Activated T-helper 1 cell treated with anti-CD3 and anti-CD28 coated beads, Interleukin-12 subunit alpha, Interleukin-12 subunit beta, Interleukin-2, Interleukin-4 antibody, amounts not matched to agents 30 ng/mL and 10 ng/mL and 1 ng/mL, durations not matched to agents 14 hours and 24 hours and 36 hours (primary cell): ENCODE measurements at regions of chr1 and their contacts with region 1.

Region 1: GRCh38 chr1:46036894-46037839 is 95.3 kb downstream of the PIK3R3 start:
- DNase-seq: peak; percentile 62
- H3K4me3 Mint-ChIP-seq: no peak overlapping the region
- H3K27ac Mint-ChIP-seq: no peak overlapping the region
- H3K4me1 Mint-ChIP-seq: no peaks in the 10 kb centered on the region
- H3K27me3 Mint-ChIP-seq: no peaks in the 10 kb centered on the region

Region 2: GRCh38 chr1:46223472-46223943 is 186.3 kb after region 1 on chr1:
- intact Hi-C with region 1: loop called (anchors 1 kb)
- DNase-seq: peak; percentile 34
- H3K4me3 Mint-ChIP-seq: no peak overlapping the region
- H3K27ac Mint-ChIP-seq: no peak overlapping the region
- H3K4me1 Mint-ChIP-seq: no peaks in the 10 kb centered on the region
- H3K27me3 Mint-ChIP-seq: peaks cover 3% of the 10 kb centered on the region